ENCODE measurements at regions of chr11 and their contacts with region 1.

Region 1: GRCh38 chr11:62841361-62842184 is 2.2 kb upstream of the WDR74 start:
- DNase-seq: peak; percentile 83
- H3K4me3 Mint-ChIP-seq: no peak overlapping the region
- H3K27ac Mint-ChIP-seq: no peak overlapping the region
- H3K4me1 Mint-ChIP-seq: peaks cover 16% of the 10 kb centered on the region
- H3K27me3 Mint-ChIP-seq: no peaks in the 10 kb centered on the region

Region 2: DNA sequence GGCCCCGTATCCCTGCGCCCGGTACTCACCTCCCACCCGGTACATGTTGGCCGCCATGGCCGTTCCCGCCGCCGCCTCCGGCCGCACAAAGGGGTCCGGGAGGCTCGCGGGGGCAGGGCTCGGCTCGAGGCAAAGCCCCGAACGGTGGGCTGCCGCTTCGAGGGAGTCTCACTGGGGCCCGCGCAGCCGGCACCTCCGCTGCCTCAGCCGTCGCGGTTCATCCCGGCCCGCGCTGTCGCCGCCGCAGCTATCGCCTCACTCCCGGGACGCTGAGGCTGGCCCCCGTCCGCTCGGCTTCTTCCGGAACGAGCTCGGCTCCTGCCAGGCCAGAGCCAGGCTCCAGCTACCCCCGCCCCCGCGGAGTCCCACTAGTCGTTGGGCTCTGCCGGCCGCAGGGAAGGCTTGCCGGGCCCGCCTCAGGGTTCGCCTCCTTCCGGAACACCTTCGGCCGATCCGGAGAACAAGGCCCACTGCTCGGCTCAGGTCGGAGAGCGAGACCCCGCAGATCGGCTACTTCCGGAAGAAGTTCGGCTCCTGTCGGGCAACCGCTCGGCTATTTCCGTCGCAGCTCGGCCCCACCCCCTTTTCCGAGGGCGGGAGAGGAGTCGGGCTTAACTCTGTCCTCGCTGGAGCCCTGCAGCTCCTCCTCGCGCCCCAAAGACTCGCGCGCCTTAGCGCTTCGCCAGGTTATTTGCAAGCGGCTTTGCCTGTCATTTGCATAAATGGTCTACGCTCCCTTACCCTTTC is 240.0 kb before region 1 on chr11 and contains the start of gene MTA2:
- intact Hi-C with region 1: loop called (anchors 5 kb)
- DNase-seq: peak; percentile 100
- H3K4me3 Mint-ChIP-seq: peak within 1 kb of the TSS; percentile 91
- H3K27ac Mint-ChIP-seq: peak within 1 kb of the TSS; percentile 95
- H3K4me1 Mint-ChIP-seq: peaks cover 41% of the 10 kb centered on the region
- H3K27me3 Mint-ChIP-seq: no peaks in the 10 kb centered on the region
- total RNA-seq, gene MTA2: 201 and 215 TPM in 2 replicates

Region 3: GRCh38 chr11:62771144-62772021 is 70.2 kb before region 1 on chr11 and contains the start of gene TAF6L:
- intact Hi-C with region 1: loop called (anchors 1 kb)
- DNase-seq: peak; percentile 92
- H3K4me3 Mint-ChIP-seq: peak within 1 kb of the TSS; percentile 88
- H3K27ac Mint-ChIP-seq: peak within 1 kb of the TSS; percentile 92
- H3K4me1 Mint-ChIP-seq: peaks cover 13% of the 10 kb centered on the region
- H3K27me3 Mint-ChIP-seq: no peaks in the 10 kb centered on the region
- total RNA-seq, gene TAF6L: 17.6 and 21.0 TPM in 2 replicates

Region 4: DNA sequence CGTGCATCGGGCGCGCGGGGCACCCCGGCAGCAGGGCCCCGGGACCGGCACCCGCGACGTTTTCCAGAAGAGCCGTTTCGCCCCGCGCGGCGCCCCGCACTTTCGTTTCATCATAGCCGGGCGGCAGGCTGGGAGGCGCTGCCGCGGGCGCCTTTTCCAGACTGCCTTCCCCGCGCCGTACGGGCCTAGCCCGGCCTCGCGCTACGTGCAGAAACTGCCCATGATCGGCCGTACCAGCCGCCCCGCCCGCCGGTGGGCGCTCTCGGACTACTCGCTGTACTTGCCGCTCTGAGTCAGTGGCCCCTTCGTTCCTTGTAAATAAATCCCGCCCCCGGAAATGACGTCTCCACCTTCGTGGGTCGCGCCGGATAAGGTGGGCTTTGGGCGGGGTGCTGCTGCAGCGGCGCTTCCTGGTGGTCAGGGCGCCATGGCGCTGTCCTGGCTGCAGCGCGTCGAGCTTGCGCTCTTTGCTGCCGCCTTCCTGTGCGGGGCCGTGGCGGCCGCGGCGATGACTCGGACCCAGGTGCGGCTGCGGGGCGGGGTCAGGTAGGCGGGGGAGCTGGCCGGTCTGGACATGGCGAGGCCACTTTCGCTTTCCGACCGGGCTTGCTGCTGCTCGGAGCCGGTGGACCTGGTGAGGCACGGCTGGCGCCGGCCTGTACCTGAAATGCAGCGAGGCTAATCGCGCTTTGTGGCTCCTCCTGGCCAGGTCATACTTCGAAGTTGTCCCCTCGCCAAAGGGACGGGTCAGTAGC is 54.4 kb before region 1 on chr11 and contains the start of gene TMEM179B:
- intact Hi-C with region 1: loop called (anchors 1 kb)
- DNase-seq: peak; percentile 95
- H3K4me3 Mint-ChIP-seq: peak within 1 kb of the TSS; percentile 90
- H3K27ac Mint-ChIP-seq: peak within 1 kb of the TSS; percentile 91
- H3K4me1 Mint-ChIP-seq: peaks cover 39% of the 10 kb centered on the region
- H3K27me3 Mint-ChIP-seq: no peaks in the 10 kb centered on the region
- total RNA-seq, gene TMEM179B: 34.6 and 35.9 TPM in 2 replicates

Region 5: GRCh38 chr11:62805076-62805892 is 36.3 kb before region 1 on chr11 and contains the start of gene NXF1:
- intact Hi-C with region 1: loop called (anchors 1 kb)
- DNase-seq: peak; percentile 95
- H3K4me3 Mint-ChIP-seq: peak within 1 kb of the TSS; percentile 98
- H3K27ac Mint-ChIP-seq: peak within 1 kb of the TSS; percentile 94
- H3K4me1 Mint-ChIP-seq: peaks cover 30% of the 10 kb centered on the region
- H3K27me3 Mint-ChIP-seq: no peaks in the 10 kb centered on the region
- total RNA-seq, gene NXF1: 134 and 139 TPM in 2 replicates

Region 6: DNA sequence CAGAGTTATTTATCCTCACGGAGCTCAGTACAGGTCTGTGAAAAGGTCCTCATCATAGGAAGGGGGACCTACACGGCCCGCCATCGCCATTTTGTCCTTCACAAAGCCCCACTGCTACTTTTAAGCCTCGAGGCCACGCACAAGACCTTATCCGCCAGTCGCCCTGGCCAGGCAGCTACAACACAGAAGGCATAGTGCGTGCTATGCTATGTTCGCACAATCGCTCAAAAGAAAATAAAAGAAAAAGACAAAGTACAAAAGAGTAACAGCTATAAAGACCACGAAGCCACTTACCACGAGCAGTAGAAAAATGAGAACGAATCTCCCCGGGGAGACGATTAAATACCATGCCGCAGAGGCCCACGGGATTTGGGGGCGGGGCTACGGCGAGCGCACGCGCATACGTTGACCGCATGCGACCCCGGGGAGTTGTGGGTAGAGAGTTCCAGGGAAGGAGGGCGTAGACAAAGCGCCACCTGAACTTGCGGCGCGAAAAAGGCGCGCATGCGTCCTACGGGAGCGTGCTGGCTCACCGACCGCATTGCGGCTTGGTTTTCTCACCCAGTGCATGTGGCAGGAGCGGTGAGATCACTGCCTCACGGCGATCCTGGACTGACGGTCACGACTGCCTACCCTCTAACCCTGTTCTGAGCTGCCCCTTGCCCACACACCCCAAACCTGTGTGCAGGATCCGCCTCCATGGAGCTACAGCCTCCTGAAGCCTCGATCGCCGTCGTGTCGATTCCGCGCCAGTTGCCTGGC is 14.2 kb after region 1 on chr11:
- intact Hi-C with region 1: loop called (anchors 1 kb)
- DNase-seq: peak; percentile 98
- H3K4me3 Mint-ChIP-seq: peak overlapping the region; percentile 96
- H3K27ac Mint-ChIP-seq: peak overlapping the region; percentile 96
- H3K4me1 Mint-ChIP-seq: peaks cover 45% of the 10 kb centered on the region
- H3K27me3 Mint-ChIP-seq: no peaks in the 10 kb centered on the region

Region 7: DNA sequence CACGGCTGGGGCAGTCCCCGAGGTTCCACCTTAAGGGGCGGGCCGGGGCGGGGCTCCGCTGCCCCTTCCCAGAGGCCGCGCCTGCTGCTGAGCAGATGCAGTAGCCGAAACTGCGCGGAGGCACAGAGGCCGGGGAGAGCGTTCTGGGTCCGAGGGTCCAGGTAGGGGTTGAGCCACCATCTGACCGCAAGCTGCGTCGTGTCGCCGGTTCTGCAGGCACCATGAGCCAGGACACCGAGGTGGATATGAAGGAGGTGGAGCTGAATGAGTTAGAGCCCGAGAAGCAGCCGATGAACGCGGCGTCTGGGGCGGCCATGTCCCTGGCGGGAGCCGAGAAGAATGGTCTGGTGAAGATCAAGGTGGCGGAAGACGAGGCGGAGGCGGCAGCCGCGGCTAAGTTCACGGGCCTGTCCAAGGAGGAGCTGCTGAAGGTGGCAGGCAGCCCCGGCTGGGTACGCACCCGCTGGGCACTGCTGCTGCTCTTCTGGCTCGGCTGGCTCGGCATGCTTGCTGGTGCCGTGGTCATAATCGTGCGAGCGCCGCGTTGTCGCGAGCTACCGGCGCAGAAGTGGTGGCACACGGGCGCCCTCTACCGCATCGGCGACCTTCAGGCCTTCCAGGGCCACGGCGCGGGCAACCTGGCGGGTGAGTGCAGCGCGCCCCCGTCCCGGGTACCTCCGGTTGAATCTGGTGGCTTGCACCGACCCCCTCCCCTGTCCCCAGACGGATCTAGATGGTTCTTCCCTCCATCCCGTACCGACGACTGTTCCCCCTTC is 39.4 kb after region 1 on chr11 and contains the start of gene SLC3A2:
- intact Hi-C with region 1: loop called (anchors 1 kb)
- DNase-seq: peak; percentile 85
- H3K4me3 Mint-ChIP-seq: peak within 1 kb of the TSS; percentile 100
- H3K27ac Mint-ChIP-seq: peak within 1 kb of the TSS; percentile 100
- H3K4me1 Mint-ChIP-seq: peaks cover 55% of the 10 kb centered on the region
- H3K27me3 Mint-ChIP-seq: no peaks in the 10 kb centered on the region
- total RNA-seq, gene SLC3A2: 245 and 286 TPM in 2 replicates

Region 8: DNA sequence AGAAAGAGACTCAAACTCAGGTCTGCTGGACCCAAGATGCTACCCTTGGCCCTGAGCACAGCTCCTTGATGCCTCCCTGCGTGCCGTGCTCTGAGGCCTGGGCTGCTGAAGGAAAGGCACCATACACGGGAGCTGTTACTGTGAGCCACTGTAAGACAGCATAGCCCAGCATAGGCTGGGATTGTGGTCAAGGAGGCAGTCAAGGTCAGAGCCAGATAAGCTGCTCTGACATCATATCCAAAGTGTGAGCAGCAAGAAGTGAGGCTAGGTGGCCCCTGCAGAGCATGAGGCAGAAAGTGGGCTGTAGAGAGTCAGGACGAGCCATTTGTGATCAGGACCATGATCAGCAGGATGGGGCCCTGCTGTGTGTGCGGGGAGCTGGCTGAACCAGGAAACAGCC is 166.3 kb after region 1 on chr11:
- intact Hi-C with region 1: no loop called
- DNase-seq: no peak
- H3K4me3 Mint-ChIP-seq: no peak overlapping the region
- H3K27ac Mint-ChIP-seq: no peak overlapping the region
- H3K4me1 Mint-ChIP-seq: no peaks in the 10 kb centered on the region
- H3K27me3 Mint-ChIP-seq: peaks cover 10% of the 10 kb centered on the region